PC-3 (cell line): ENCODE measurements at regions of chr1 and their contacts with region 1.

Region 1: DNA sequence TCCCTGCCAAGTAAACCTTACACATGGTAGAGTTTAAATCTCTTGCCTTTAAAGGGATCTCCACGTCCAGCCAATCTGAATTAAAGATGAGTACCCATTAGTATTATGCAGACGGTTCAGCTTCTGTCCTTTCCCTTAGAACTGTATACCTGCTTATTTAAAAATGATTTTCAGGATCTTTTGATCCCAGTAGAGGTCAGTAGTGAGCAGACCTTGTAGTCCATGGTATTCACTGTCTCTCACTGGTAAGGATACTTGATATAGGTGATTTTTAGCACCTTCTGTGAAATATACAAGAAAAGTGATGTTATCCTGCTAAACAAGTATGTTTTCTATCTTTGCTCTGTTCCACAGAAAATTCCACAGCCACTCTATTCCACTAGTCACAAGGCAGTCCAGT is 1211.6 kb upstream of the ADGRL4 start:
- DNase-seq: peak; percentile 77
- ATAC-seq: peak; percentile 92
- H3K4me3 ChIP-seq: no peak overlapping the region
- H3K27ac ChIP-seq: no peak overlapping the region
- H3K4me1 ChIP-seq: no peaks in the 10 kb centered on the region
- H3K27me3 ChIP-seq: no peaks in the 10 kb centered on the region
- CTCF ChIP-seq: peak; percentile 67

Region 2: GRCh38 chr1:79497193-79497773 is 720.8 kb before region 1 on chr1:
- CTCF ChIA-PET with region 1: no interaction called
- POLR2A ChIA-PET with region 1: no interaction called
- intact Hi-C with region 1: loop called (anchors 5 kb)
- DNase-seq: peak; percentile 66
- ATAC-seq: peak; percentile 57
- H3K4me3 ChIP-seq: no peak overlapping the region
- H3K27ac ChIP-seq: no peak overlapping the region
- H3K4me1 ChIP-seq: no peaks in the 10 kb centered on the region
- H3K27me3 ChIP-seq: no peaks in the 10 kb centered on the region
- CTCF ChIP-seq: peak; percentile 96

Region 3: GRCh38 chr1:80293818-80294217 is 75.7 kb after region 1 on chr1:
- CTCF ChIA-PET with region 1: no interaction called
- POLR2A ChIA-PET with region 1: no interaction called
- intact Hi-C with region 1: no loop called
- DNase-seq: no peak
- ATAC-seq: no peak
- H3K4me3 ChIP-seq: no peak overlapping the region
- H3K27ac ChIP-seq: no peak overlapping the region
- H3K4me1 ChIP-seq: no peaks in the 10 kb centered on the region
- H3K27me3 ChIP-seq: no peaks in the 10 kb centered on the region
- CTCF ChIP-seq: no peak

Region 4: DNA sequence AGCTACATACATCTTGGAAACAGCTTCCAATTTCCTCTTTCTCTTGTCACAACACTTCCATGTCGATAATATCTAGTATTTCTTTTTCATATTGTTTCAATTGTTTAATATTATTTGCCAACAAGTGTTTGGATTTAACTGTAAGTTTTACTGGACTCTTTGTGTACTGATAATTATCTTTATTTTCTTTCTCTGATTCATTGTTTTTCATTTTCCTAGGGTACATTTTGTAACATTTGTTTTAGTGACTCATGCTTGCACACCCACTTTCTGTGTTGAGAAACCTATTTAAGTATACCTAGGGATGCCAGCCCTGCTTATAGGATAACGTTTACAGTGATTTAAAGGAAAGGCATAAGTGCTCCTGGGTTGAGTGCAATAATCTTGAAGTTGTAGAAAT is 174.4 kb after region 1 on chr1:
- CTCF ChIA-PET with region 1: no interaction called
- POLR2A ChIA-PET with region 1: no interaction called
- intact Hi-C with region 1: loop called (anchors 5 kb)
- DNase-seq: peak; percentile 81
- ATAC-seq: peak; percentile 98
- H3K4me3 ChIP-seq: no peak overlapping the region
- H3K27ac ChIP-seq: 0 out of 2 replicates have a peak overlapping the region, but pooled peaks have one; percentile 12
- H3K4me1 ChIP-seq: peaks cover 7% of the 10 kb centered on the region; the same call in 1 of the 2 replicates
- H3K27me3 ChIP-seq: no peaks in the 10 kb centered on the region
- CTCF ChIP-seq: no peak

Region 5: GRCh38 chr1:80629304-80629837 is 411.3 kb after region 1 on chr1:
- CTCF ChIA-PET with region 1: no interaction called
- POLR2A ChIA-PET with region 1: no interaction called
- intact Hi-C with region 1: no loop called
- DNase-seq: no peak
- ATAC-seq: no peak
- H3K4me3 ChIP-seq: no peak overlapping the region
- H3K27ac ChIP-seq: no peak overlapping the region
- H3K4me1 ChIP-seq: no peaks in the 10 kb centered on the region
- H3K27me3 ChIP-seq: no peaks in the 10 kb centered on the region
- CTCF ChIP-seq: no peak

Region 6: DNA sequence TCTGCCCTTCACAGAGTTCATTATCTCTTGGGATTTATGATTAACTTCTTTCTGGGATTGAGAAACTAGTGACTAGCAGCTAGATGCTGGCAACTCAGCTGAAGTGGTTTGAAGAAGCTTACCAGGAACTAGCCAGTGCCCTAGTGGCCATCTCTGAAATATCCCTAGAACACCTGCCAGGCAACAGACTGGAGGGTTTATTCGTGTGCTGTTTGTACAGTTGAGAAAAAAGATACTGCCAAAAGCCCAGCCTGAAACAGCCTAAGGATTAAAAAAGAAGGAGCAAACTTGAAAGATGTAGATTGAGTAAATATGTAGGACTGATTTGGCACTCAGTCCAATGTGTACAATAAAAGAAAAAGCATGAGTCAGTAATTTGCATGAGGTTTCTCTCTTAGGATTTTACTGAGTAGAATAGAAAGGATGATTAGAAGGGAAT is 438.0 kb after region 1 on chr1:
- CTCF ChIA-PET with region 1: no interaction called
- POLR2A ChIA-PET with region 1: no interaction called
- intact Hi-C with region 1: loop called (anchors 5 kb)
- DNase-seq: peak; percentile 59
- ATAC-seq: peak; percentile 94
- H3K4me3 ChIP-seq: no peak overlapping the region
- H3K27ac ChIP-seq: peak overlapping the region; percentile 68
- H3K4me1 ChIP-seq: peaks cover 11% of the 10 kb centered on the region; the same call in 1 of the 2 replicates
- H3K27me3 ChIP-seq: no peaks in the 10 kb centered on the region
- CTCF ChIP-seq: peak; percentile 60

Region 7: GRCh38 chr1:81760477-81761097 is 1542.5 kb after region 1 on chr1:
- CTCF ChIA-PET with region 1: no interaction called
- POLR2A ChIA-PET with region 1: no interaction called
- intact Hi-C with region 1: loop called (anchors 5 kb)
- DNase-seq: peak; percentile 46
- ATAC-seq: no peak
- H3K4me3 ChIP-seq: no peak overlapping the region
- H3K27ac ChIP-seq: no peak overlapping the region
- H3K4me1 ChIP-seq: no peaks in the 10 kb centered on the region
- H3K27me3 ChIP-seq: no peaks in the 10 kb centered on the region
- CTCF ChIP-seq: peak; percentile 64